Keratinocyte (primary cell): ENCODE measurements at regions of chr13 and their contacts with region 1.

Region 1: GRCh38 chr13:31236211-31236786 is 36.5 kb downstream of the B3GLCT start:
- DNase-seq: no peak
- H3K4me3 ChIP-seq: no peak overlapping the region
- H3K27ac ChIP-seq: no peak overlapping the region
- H3K4me1 ChIP-seq: no peaks in the 10 kb centered on the region
- H3K27me3 ChIP-seq: no peaks in the 10 kb centered on the region
- CTCF ChIP-seq: peak in 2 of 3 experiments; percentile 48 to 55

Region 2: GRCh38 chr13:30847650-30848307 is 388.5 kb before region 1 on chr13:
- dilution Hi-C with region 1: no loop called
- DNase-seq: no peak
- H3K4me3 ChIP-seq: no peak overlapping the region
- H3K27ac ChIP-seq: no peak overlapping the region
- H3K4me1 ChIP-seq: peaks cover 11% of the 10 kb centered on the region
- H3K27me3 ChIP-seq: no peaks in the 10 kb centered on the region
- CTCF ChIP-seq: no peak

Region 3: DNA sequence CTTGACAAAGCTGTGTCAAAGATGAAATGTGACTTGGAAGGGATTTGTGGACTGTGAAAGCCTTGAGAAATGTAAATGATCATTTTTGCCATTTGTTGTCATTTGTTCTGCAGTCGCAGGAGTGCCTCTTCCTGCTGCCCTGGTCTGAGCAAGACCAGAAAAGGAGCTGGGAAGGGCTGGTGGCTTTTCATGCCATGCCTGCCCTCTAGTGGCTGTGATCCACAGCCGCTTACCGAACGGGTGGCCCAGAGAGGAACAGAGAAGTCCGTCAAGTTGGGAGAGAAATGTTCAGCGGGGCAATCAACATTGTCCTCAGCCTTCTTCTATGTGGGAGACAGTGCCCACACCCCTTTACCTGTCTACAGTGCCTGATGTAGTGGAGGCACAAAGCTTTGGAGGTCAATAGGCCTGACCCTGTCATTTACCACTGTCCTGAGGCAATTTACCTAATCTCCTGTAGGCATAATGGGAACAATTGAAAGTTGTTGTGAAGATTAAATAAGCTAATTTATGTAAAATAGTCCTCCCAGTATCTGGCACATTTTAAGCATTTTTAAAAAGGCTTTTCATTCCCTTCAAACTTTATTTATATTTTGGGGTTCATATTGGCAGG is 187.9 kb after region 1 on chr13:
- dilution Hi-C with region 1: loop called (anchors 25 kb)
- DNase-seq: no peak
- H3K4me3 ChIP-seq: no peak overlapping the region
- H3K27ac ChIP-seq: no peak overlapping the region
- H3K4me1 ChIP-seq: no peaks in the 10 kb centered on the region
- H3K27me3 ChIP-seq: no peaks in the 10 kb centered on the region
- CTCF ChIP-seq: peak; percentile 89 to 93 (median 92)